ENCODE measurements at regions of chr14 and their contacts with region 1.

Region 1: DNA sequence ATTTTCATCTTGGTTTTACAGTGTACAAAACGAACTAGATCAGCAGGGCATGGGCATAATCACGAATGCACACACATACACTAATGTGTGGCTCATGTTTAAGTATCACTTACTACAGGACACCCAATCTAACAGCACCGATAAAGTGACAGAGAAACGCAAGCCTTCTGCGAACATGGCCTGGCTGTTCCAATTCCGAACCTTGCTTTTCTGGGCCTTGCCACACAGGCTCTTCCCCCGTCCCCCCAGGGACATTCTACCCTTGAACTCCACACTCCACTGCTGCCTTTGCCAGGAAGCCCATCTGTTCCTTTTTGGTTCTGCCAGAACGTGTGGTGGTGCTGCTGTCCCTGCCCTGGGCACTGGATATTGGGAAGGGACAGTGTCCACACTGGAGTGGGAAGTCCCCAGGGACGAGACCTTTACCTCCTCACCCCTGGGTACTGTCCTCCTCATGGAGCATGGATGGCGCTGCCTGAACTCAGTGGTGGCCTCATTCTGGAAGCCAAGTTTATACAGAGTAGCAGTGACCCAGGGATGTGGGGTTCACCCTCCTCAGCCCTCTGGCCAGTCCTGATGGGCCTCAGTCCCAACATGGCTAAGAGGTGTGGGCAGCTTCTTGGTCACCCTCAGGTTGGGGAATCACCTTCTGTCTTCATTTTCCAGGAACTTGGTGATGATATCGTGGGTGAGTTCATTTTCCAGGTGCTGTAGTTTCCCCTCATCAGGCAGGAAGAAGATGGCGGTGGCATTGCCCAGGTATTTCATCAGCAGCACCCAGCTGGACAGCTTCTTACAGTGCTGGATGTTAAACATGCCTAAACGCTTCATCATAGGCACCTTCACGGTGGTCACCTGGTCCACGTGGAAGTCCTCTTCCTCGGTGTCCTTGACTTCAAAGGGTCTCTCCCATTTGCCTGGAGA is 7.9 kb downstream of the SERPINA1 start:
- DNase-seq: no peak
- H3K4me3 ChIP-seq: no peak overlapping the region
- H3K27ac ChIP-seq: no peak overlapping the region
- H3K4me1 ChIP-seq: no peaks in the 10 kb centered on the region
- H3K27me3 ChIP-seq: no peaks in the 10 kb centered on the region
- CTCF ChIP-seq: no peak

Region 2: GRCh38 chr14:94364037-94364436 is 16.4 kb before region 1 on chr14:
- CTCF ChIA-PET with region 1: no interaction called
- POLR2A ChIA-PET with region 1: no interaction called
- intact Hi-C with region 1: loop called (anchors 1 kb)
- DNase-seq: no peak
- H3K4me3 ChIP-seq: no peak overlapping the region
- H3K27ac ChIP-seq: no peak overlapping the region
- H3K4me1 ChIP-seq: no peaks in the 10 kb centered on the region
- H3K27me3 ChIP-seq: no peaks in the 10 kb centered on the region
- CTCF ChIP-seq: no peak

Measured in A673 (cell line).